ENCODE measurements at regions of chr6 and their contacts with region 1.

Region 1: GRCh38 chr6:63571881-63572732 is at the starts of genes LOC128125822 and PTP4A1:
- DNase-seq: peak; percentile 99
- H3K4me3 ChIP-seq: peak within 1 kb of the TSS; percentile 85
- H3K27ac ChIP-seq: peak within 1 kb of the TSS; percentile 76
- H3K4me1 ChIP-seq: peaks cover 23% of the 10 kb centered on the region
- CTCF ChIP-seq: no peak
- total RNA-seq, gene PTP4A1: 20.9 and 21.2 TPM in 2 replicates

Region 2: DNA sequence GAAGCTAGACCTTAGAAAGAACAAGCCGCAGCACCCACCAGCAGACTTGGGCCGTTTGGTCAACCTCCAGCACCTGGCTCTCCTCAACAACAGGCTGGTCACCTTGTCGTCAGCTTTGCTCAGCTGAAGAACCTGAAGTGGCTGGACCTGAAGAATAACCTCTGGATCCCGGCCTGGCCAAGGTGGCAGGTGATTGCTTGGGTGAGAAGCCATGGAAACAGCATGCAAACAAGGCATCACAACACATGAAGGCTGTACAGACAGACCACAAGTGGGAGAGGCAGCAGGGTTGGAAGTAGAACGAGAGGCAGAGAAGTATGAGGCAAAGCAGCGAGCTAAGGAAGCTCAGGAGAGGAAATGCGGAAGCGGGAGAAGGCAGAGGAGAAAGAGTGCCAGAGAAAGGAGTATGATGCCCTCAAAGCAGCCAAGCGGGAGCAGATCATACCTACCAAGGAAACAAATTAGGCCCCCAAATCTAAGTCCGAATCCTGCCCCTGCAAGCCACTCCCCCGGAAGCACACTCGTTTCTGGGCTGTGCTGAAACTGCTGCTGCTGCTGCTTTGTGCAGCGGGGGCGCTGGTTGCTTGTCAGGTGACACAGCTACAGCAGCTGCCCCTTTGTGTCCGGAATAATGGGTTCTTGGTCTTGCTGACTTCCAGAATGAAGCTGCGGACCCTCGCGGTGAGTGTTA is 130.7 kb before region 1 on chr6:
- CTCF ChIA-PET with region 1: no interaction called
- POLR2A ChIA-PET with region 1: no interaction called
- intact Hi-C with region 1: loop called (anchors 5 kb)
- DNase-seq: peak; percentile 77
- H3K4me3 ChIP-seq: peak overlapping the region; percentile 72
- H3K27ac ChIP-seq: peak overlapping the region; percentile 56
- H3K4me1 ChIP-seq: peaks cover 4% of the 10 kb centered on the region
- CTCF ChIP-seq: peak; percentile 58

Region 3: DNA sequence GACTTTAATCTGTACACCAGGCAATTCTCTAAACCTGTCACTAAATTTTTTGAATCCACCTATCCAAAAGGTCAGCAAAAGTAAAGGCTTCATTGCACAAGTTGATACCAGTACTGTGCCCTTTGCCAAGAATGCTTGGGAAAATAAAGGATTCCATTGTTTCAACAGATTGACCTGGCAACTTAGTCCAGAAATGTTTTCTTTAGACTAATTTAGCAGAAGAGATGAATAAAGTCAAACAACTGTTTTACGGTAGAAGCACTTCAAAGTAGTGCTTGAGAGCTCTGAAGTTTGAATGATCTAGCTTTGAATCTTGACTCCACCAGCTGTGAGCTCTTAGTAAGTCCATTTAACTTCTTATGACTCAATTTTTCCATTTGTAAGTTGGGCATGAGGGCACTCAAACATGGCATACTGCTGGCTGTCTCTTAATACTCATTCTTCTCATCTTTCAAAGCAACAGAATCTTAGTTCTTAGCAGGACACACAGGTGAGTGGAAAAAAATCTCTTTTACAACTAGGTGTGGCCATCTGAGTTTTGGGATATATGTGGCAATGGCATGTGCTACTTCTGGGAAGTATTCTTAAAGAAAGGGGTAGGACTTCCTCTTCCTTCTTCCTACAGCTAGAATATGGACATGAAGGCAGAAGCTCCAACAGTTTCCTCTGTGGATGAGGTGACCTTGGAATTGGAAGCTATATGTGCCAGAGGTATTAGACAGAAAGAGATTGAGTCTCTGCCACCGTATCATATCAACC is 55.7 kb before region 1 on chr6:
- CTCF ChIA-PET with region 1: no interaction called
- POLR2A ChIA-PET with region 1: interaction called, 4 read pairs
- intact Hi-C with region 1: loop called (anchors 2 kb)
- DNase-seq: no peak
- H3K4me3 ChIP-seq: no peak overlapping the region
- H3K27ac ChIP-seq: no peak overlapping the region
- H3K4me1 ChIP-seq: peaks cover 25% of the 10 kb centered on the region
- CTCF ChIP-seq: no peak

Region 4: DNA sequence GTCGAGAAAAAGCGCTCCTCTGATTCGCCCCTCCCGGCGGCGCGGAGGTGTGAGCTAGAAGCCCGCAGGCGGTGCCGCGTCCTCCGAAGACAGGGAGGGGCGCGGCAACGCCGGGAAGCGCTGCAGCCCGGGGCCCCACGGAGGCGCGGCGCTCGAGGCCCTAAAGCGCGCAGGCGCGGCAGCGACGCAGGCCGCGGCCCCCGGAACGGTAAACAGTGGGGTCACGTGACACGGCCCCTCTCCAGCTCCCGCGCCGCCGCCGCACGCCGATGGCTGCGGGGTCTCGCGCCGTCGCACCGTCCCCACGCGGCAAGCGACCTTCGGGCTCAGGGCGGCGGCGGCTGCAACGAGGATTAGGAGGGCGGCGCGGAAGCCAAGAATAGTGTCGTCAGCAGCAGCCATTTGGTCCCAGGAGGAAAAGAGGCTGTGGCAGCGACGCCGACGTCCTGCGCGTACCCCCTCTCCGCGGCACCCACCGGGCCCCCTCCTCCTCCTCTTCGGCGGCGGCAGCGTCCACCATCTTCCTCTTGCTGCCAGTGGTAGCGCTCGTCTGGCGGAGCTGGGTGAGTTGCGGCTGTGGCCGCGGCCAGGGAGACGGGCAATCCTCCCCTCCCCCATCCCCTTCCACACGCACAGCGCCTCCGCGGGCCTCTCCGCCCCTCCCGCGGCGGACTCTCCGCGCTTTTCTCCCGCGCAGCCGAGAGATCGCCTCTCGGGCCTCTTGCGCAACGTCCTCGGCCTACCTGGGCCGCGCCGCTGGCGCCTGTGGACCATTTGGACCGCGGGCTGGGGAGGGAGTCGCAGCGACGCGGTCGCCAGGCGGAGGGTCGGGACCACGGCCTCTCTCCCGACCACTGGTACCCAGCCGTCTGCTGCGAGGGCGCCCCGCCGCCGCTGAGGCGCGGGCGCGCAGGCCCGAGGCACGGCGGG is 63.7 kb after region 1 on chr6 and contains the start of gene PHF3:
- CTCF ChIA-PET with region 1: no interaction called
- POLR2A ChIA-PET with region 1: no interaction called
- intact Hi-C with region 1: loop called (anchors 2 kb)
- DNase-seq: peak; percentile 96
- H3K4me3 ChIP-seq: peak within 1 kb of the TSS; percentile 78
- H3K27ac ChIP-seq: peak within 1 kb of the TSS; percentile 77
- H3K4me1 ChIP-seq: peaks cover 48% of the 10 kb centered on the region
- CTCF ChIP-seq: peak; percentile 42
- total RNA-seq, gene PHF3: 54.0 and 54.8 TPM in 2 replicates

Measured in OCI-LY7 (cell line).